SK-N-SH (cell line): ENCODE measurements at regions of chr1 and their contacts with region 1.

Region 1: DNA sequence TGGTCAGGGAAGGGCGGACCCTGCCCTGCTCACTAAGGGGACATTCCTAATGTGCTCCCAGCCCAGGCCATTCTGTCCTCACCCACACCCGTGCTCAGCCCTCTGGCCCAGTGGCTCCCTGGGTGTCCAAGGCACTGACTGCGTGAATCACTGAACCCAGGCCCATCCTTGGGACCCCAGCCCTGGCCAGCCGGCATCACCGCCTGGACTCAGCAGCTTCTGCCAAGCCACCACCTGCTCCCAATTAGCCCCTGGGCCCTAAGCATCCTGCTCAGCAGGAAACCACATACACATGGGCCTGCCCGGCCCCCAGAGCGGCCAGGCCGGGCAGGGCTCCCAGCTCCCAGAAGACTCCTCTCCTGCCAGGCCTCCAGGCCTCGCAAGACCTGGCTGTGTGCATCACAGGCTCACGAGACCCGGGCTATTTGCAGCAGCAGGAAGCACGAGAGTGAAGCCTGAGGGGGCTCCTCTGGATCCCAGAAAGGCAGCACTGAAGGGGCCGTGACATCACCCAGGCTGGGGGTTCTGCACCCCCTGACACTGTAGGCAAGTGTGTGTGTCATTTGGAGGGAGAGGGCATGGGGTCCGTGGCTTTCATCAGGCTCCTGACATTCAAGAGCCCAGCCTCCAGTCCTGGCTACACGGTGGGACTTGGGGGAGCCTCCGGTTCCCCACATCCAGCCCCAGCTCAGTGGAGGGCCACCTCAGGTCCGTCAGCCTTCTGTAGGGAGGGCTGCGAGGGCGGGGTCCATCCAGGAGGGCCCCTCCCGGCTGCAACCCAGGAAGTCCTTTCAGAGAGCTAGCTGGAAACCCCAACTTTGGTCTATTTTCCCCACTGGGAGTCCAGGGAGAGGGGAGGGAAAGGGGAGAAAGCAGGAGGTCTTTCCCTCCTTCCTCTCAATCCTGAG is 1.6 kb downstream of the MFAP2 start:
- DNase-seq: peak; percentile 96
- H3K4me3 ChIP-seq: peak overlapping the region; percentile 62 to 76
- H3K27ac ChIP-seq: peak overlapping the region; percentile 87 to 97
- H3K4me1 ChIP-seq: peaks cover 21 to 45% of the 10 kb centered on the region in 2 experiments; a peak in 2 of 4 replicates
- H3K27me3 ChIP-seq: no peaks in the 10 kb centered on the region
- CTCF ChIP-seq: no peak
- EP300 ChIP-seq: peak; percentile 58 to 73; a peak in 3 of 4 replicates
- RAD21 ChIP-seq: no peak

Region 2: DNA sequence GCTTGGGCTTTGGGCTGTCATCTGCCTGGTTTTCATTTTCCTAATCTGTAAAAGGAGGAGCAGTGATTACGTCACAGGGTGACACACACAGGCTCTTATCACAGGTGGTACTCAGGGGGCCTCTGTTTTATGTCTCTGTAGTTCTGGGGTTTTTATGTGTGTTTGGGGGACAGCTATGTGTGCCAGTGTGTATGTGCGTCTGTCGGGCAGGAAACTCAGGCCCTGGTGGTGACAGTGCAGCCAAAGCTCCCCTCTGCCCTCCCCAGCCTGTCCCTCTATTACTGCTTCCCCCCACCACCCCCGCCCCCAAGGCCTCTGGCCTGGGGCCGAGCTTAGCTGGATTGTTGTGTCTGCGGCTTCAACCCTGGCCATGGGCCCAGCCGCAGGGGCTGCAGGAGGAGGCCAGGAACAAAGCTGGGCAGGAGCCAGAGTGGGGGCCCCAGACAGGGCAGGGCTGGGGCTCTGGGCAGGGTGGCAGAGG is 11.7 kb before region 1 on chr1:
- CTCF ChIA-PET with region 1: interaction called, 32 read pairs
- POLR2A ChIA-PET with region 1: interaction called, 39 read pairs
- DNase-seq: peak; percentile 70
- H3K4me3 ChIP-seq: no peak overlapping the region
- H3K27ac ChIP-seq: peak overlapping the region in 1 of 2 experiments; percentile 76; a peak in 2 of 4 replicates
- H3K4me1 ChIP-seq: peaks cover 11 to 32% of the 10 kb centered on the region in 2 experiments; a peak in 2 of 4 replicates
- H3K27me3 ChIP-seq: no peaks in the 10 kb centered on the region
- CTCF ChIP-seq: no peak
- EP300 ChIP-seq: peak; percentile 21 to 51; a peak in 2 of 4 replicates
- RAD21 ChIP-seq: no peak

Region 3: GRCh38 chr1:17011439-17012307 is 32.9 kb after region 1 on chr1 and contains the start of gene ATP13A2:
- CTCF ChIA-PET with region 1: interaction called, 3 read pairs
- POLR2A ChIA-PET with region 1: interaction called, 11 read pairs
- DNase-seq: peak; percentile 94
- H3K4me3 ChIP-seq: peak within 1 kb of the TSS; percentile 79 to 92
- H3K27ac ChIP-seq: peak within 1 kb of the TSS in 1 of 2 experiments; percentile 36; a peak in 1 of 4 replicates
- H3K4me1 ChIP-seq: peaks cover 12 to 22% of the 10 kb centered on the region in 2 experiments; a peak in 2 of 4 replicates
- H3K27me3 ChIP-seq: no peaks in the 10 kb centered on the region
- CTCF ChIP-seq: no peak
- EP300 ChIP-seq: no peak
- RAD21 ChIP-seq: no peak
- polyA plus RNA-seq, gene ATP13A2: 15.9 and 29.3 TPM in 2 replicates

Region 4: DNA sequence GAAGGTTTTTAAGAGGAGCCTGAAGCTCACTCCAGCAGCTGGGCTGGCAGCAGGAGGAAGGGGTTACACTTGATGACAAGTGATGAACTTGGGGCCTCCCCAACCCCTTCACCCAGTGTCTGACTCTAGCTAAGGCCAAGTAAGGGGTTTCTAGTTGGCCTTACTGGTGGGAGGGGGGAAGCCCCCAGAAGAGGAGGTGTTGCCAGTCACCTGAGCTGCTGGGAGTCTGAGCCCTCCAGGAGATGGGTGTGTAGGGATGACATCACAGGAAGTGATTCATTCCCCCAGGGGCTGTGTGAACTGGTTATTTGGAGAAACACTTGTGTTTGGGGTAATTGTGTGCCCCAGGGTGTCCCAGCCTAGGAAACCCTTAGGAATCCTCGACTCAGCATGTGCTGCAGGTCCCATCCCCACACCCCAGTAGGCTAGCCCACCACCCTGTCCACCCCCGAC is 229.2 kb after region 1 on chr1:
- CTCF ChIA-PET with region 1: no interaction called
- POLR2A ChIA-PET with region 1: no interaction called
- DNase-seq: no peak
- H3K4me3 ChIP-seq: no peak overlapping the region
- H3K27ac ChIP-seq: no peak overlapping the region
- H3K4me1 ChIP-seq: peaks cover 7 to 18% of the 10 kb centered on the region in 2 experiments; a peak in 3 of 4 replicates
- H3K27me3 ChIP-seq: no peaks in the 10 kb centered on the region
- CTCF ChIP-seq: no peak
- EP300 ChIP-seq: no peak
- RAD21 ChIP-seq: no peak